ENCODE measurements at regions of chr15 and their contacts with region 1.

Region 1: GRCh38 chr15:60526127-60526625 is 47.2 kb upstream of the ICE2 start:
- DNase-seq: peak; percentile 52
- ATAC-seq: peak; percentile 50
- H3K4me3 Mint-ChIP-seq: no peak overlapping the region
- H3K27ac Mint-ChIP-seq: peak overlapping the region; percentile 0
- H3K4me1 Mint-ChIP-seq: peaks cover 63% of the 10 kb centered on the region
- H3K27me3 Mint-ChIP-seq: no peaks in the 10 kb centered on the region

Region 2: DNA sequence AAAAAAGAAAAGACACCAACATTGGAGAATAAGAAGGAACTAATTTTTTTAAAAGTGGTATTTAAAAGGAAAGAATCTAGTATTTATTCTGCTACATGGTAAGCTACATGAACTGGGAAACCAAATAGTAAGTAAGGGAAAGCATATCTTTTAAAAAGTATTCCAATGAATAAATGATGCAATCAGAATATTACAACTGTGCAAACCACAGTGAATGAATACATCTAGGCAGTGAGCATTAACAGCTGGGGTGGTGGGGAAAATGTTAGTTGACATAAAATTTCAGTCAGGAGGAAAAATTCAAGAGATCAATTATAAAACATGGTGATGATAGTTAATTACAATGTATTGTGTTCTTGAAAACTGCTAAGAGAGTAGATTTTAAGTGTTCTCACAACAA is 64.1 kb before region 1 on chr15:
- CTCF ChIA-PET with region 1: no interaction called
- POLR2A ChIA-PET with region 1: no interaction called
- intact Hi-C with region 1: no loop called
- DNase-seq: no peak
- ATAC-seq: no peak
- H3K4me3 Mint-ChIP-seq: no peak overlapping the region
- H3K27ac Mint-ChIP-seq: no peak overlapping the region
- H3K4me1 Mint-ChIP-seq: peaks cover 3% of the 10 kb centered on the region
- H3K27me3 Mint-ChIP-seq: no peaks in the 10 kb centered on the region

Region 3: GRCh38 chr15:60536314-60536713 is 10.1 kb after region 1 on chr15:
- CTCF ChIA-PET with region 1: interaction called, 60 read pairs
- POLR2A ChIA-PET with region 1: interaction called, 8 read pairs
- intact Hi-C with region 1: no loop called
- DNase-seq: no peak
- ATAC-seq: no peak
- H3K4me3 Mint-ChIP-seq: no peak overlapping the region
- H3K27ac Mint-ChIP-seq: no peak overlapping the region
- H3K4me1 Mint-ChIP-seq: peaks cover 83% of the 10 kb centered on the region
- H3K27me3 Mint-ChIP-seq: no peaks in the 10 kb centered on the region